ENCODE measurements at regions of chr9 and their contacts with region 1.

Region 1: GRCh38 chr9:35646533-35647265 is 4.0 kb downstream of the SIT1 start:
- DNase-seq: peak; percentile 85
- H3K4me3 ChIP-seq: peak overlapping the region; percentile 62 to 95 (median 72)
- H3K27ac ChIP-seq: peak overlapping the region; percentile 85
- H3K4me1 ChIP-seq: peaks cover 6% of the 10 kb centered on the region
- H3K27me3 ChIP-seq: no peaks in the 10 kb centered on the region
- CTCF ChIP-seq: peak; percentile 77 to 98

Region 2: DNA sequence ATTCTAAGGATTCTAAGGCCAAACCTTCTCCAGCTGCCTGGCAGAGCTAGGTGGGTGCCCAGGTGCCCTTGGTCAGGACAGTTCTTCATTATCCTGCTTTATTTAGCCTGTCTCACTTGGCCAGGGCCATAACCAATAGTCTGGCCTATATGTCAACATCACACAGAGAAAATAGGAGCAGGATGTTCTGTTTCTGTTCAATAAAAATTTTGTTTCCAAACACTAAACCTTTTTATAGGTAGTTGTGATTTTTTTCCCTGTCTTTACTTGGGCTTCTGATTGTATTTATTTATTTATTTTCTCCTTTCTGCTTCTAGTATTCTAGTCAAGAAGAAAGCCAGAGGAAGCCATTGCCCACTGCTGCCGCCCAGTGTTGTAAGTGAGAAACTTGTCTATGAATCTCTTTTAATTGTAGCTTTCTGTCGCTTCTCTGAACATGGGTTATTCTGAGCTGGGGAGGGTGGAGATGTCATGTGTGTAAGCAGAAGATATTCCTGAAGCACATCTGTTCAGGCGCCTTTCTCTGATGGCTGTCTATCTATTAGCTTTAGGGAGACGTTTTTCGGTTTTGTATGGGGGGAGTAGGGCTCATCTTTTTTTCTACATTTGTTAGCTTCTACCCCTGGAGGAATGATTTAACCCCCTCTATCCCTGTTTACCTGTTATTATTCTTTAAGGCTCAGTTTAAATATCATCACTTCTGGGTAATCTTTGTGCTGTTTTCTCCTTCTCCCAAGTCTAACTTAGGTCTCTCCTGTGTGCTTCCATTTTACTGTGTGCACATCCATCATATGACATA is 387.8 kb before region 1 on chr9:
- CTCF ChIA-PET with region 1: interaction called, 10 read pairs
- dilution Hi-C with region 1: no loop called
- in situ Hi-C with region 1: no loop called
- intact Hi-C with region 1: no loop called
- DNase-seq: peak; percentile 51
- H3K4me3 ChIP-seq: no peak overlapping the region
- H3K27ac ChIP-seq: no peak overlapping the region
- H3K4me1 ChIP-seq: no peaks in the 10 kb centered on the region
- H3K27me3 ChIP-seq: no peaks in the 10 kb centered on the region
- CTCF ChIP-seq: peak; percentile 58 to 74

Region 3: GRCh38 chr9:35628389-35628991 is 18.2 kb before region 1 on chr9:
- CTCF ChIA-PET with region 1: no interaction called
- dilution Hi-C with region 1: no loop called
- in situ Hi-C with region 1: no loop called
- intact Hi-C with region 1: no loop called
- DNase-seq: no peak
- H3K4me3 ChIP-seq: no peak overlapping the region
- H3K27ac ChIP-seq: no peak overlapping the region
- H3K4me1 ChIP-seq: no peaks in the 10 kb centered on the region
- H3K27me3 ChIP-seq: no peaks in the 10 kb centered on the region
- CTCF ChIP-seq: no peak

Region 4: GRCh38 chr9:35657546-35658136 is 10.9 kb after region 1 on chr9 and contains the start of gene RMRP:
- CTCF ChIA-PET with region 1: interaction called, 7 read pairs
- dilution Hi-C with region 1: no loop called
- in situ Hi-C with region 1: no loop called
- intact Hi-C with region 1: loop called (anchors 1 kb)
- DNase-seq: peak; percentile 99
- H3K4me3 ChIP-seq: peak within 1 kb of the TSS; percentile 88 to 95 (median 94)
- H3K27ac ChIP-seq: peak within 1 kb of the TSS; percentile 100
- H3K4me1 ChIP-seq: peaks cover 26% of the 10 kb centered on the region
- H3K27me3 ChIP-seq: no peaks in the 10 kb centered on the region
- CTCF ChIP-seq: peak; percentile 2 to 25
- total RNA-seq, gene RMRP: 16,267 to 114,057 TPM

Region 5: DNA sequence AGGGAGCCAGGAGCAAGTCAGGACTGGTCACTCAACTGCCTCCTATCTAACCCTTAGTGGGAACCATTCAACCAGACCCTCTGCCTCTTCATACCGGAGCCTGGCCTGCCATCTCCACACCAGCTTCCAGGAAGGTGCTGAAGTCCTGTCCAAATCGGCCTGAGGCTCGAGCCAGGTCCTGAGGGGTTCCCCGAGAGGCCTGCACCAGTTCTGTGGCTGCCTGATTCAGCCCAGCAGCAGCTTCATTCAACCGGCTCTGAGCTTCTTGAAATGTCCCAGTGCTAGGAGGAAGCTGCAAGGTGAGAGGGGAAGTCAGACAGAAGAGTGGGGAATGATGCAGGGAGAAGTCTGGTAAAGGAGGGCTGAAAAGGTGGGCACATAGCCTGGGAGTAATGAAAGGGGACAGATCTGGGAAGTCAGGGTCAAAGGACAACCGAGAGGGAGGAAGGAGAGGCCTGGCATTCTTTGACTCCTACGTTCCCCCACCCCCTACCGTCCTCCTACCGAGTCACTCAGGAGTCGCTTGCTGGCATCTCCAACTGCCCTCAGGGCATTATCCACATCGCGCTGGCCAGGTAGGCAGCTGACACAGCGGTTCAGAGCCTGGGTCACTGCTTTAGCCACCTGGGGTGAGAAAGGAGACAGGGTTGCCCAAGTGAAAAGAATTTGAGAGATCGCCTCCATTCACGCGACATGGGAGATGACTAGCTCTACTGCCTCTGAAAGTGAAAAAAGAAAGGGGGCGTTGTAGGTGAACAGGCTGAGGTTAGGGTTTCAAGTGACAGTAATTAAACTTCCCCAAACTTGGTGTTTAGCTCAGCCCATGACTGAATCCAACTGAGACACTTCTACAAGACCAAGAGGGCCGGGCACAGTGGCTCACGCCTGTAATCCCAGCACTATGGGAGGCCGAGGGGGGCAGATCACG is 65.1 kb after region 1 on chr9:
- CTCF ChIA-PET with region 1: interaction called, 5 read pairs
- dilution Hi-C with region 1: loop called (anchors 5 kb)
- in situ Hi-C with region 1: no loop called
- intact Hi-C with region 1: no loop called
- DNase-seq: no peak
- H3K4me3 ChIP-seq: no peak overlapping the region
- H3K27ac ChIP-seq: no peak overlapping the region
- H3K4me1 ChIP-seq: no peaks in the 10 kb centered on the region
- H3K27me3 ChIP-seq: no peaks in the 10 kb centered on the region
- CTCF ChIP-seq: no peak

Region 6: DNA sequence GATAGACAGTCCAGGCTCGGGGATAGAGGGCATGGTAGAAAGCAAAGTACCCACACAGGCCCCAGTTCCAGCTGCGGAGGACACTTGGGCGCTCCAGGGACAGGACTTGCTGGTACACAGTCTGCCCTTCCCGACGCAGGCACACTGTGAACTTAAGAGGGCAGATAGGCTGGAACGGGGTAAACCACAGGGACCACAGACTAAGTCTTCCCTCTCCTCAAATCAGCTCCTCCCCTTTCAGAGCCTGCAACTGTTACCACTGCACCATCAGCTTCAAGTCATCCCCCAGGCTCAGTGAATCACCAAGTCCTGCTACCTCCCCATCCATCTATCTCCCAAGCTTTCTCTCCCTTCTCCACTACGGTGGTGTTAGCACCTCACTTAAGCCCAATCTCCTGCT is 95.0 kb after region 1 on chr9:
- CTCF ChIA-PET with region 1: no interaction called
- dilution Hi-C with region 1: loop called (anchors 5 kb)
- in situ Hi-C with region 1: no loop called
- intact Hi-C with region 1: no loop called
- DNase-seq: no peak
- H3K4me3 ChIP-seq: no peak overlapping the region
- H3K27ac ChIP-seq: no peak overlapping the region
- H3K4me1 ChIP-seq: peaks cover 9% of the 10 kb centered on the region
- H3K27me3 ChIP-seq: no peaks in the 10 kb centered on the region
- CTCF ChIP-seq: no peak

Region 7: DNA sequence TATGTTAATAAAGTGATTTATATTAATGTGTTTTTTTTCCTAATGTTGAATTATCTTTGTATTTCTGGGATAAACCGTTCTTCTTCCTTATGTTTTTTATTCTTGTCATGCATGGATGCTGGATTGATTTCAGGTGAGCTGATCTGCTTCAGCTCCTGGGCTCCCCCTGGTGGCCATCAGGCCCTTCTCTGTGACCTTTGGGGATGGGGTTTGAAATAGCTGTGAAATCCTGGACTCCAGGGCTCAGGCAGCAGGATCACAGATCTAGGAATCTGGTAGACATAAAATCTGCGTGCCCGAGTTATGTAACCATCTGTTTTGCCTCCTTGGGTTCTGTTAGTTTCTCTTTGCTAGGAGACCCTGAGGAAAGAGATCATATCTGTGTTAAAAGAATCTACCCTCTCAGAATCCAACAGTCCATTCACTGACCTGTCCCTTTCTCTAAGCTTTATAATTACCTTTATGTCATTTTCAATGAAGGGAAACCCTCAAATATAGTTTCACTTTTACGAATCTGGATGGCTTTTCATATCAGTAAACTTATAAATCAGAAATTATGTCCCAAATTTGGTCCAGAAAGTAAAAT is 235.7 kb after region 1 on chr9:
- CTCF ChIA-PET with region 1: no interaction called
- dilution Hi-C with region 1: no loop called
- in situ Hi-C with region 1: no loop called
- intact Hi-C with region 1: loop called (anchors 1 kb)
- DNase-seq: peak; percentile 46
- H3K4me3 ChIP-seq: no peak overlapping the region
- H3K27ac ChIP-seq: no peak overlapping the region
- H3K4me1 ChIP-seq: no peaks in the 10 kb centered on the region
- H3K27me3 ChIP-seq: no peaks in the 10 kb centered on the region
- CTCF ChIP-seq: peak; percentile 99

Measured in mammary epithelial cell (primary cell).